ENCODE measurements at regions of chr7 and their contacts with region 1.

Region 1: DNA sequence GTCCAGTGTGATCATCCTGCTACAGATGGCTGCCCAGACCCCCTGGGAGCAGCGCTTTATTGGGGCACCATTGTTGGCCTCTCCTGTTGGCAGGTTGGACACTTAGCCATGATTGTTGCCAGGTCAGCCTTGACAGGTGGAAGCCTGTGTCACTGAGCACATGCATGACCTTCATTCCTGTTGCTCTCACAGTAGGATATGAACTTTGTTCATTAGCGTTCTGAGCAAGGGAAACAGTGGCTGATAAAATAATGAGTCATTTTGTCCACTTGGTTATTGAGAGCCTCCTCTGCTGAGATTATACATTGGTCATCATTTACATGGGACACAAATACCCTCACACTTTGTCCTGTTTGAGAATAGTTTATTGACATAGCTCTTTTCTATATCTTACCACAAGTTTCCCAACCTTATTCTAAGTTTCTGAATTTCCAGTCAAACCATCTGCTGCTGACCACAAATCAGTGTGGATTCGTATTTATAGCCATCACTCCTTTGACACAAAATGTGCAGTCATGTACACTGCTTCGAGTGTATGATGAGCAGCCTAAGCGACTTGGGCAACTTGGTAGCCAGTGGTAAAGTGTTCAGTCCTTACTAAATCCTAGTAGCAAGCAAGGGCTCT is 102.6 kb downstream of the TPST1 start:
- DNase-seq: no peak

Region 2: GRCh38 chr7:66344166-66344565 is 36.5 kb after region 1 on chr7:
- intact Hi-C with region 1: loop called in 1 of 2 experiments (anchors 1 kb)
- DNase-seq: no peak